A549 (cell line): ENCODE measurements at regions of chr5 and their contacts with region 1.

Region 1: DNA sequence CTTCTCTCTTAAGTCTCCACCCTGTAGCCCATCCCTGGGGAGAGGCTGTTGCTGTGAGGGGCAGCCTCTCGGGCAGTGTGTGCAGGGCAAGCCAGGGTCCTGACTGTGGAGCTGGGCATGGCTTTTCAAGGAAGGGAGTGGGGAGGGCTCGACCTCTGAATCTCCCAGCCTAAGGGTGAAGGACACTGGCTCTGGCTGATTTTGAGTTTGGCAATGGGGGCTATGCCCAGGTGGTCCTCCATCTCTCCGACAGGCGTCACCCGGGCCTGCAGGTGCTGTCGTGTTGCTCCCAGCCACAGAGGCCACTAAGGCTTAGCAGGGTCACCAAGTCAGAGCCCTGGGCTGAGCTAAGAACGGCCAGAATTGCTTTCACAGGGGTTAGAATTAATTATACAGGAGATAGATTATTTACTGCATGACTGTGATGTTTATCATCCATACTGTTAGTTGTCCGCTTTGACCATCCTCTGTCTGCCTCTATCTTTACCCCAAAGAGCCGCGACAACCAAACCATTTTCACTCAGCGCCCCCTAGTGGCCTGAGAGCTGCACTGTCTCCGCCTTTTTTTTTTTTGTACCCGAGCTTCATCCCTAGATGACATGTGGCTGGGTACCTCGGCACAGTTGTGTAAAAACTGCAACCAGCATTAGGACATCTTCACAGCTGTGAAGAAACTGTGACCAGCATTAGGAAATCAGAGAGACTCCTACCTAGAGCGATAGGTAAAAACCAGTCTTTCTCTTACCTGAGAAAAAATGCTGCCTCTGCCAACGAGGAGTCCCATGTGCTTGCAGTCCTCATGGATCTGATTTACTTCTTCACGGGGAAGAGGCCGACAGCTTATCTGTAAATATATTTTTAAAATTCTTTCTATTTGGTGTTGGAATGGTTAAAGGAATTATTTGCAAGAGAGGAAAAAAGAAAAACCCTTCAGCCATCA is 44.5 kb downstream of the AGXT2 start:
- DNase-seq: peak; percentile 54 to 66
- ATAC-seq: peak; percentile 84 to 93
- H3K4me3 ChIP-seq: no peak overlapping the region
- H3K27ac ChIP-seq: no peak overlapping the region
- H3K4me1 ChIP-seq: no peaks in the 10 kb centered on the region; the same call in 2 of the 3 replicates
- CTCF ChIP-seq: peak; percentile 84
- EP300 ChIP-seq: no peak
- POLR2A ChIP-seq: no peak
- RAD21 ChIP-seq: peak; percentile 77 to 84

Region 2: GRCh38 chr5:34474573-34475021 is 528.7 kb before region 1 on chr5:
- CTCF ChIA-PET with region 1: interaction called, 54 read pairs
- POLR2A ChIA-PET with region 1: no interaction called
- DNase-seq: peak; percentile 57 to 70
- ATAC-seq: peak; percentile 68 to 93; a peak in 5 of 6 replicates
- H3K4me3 ChIP-seq: no peak overlapping the region
- H3K27ac ChIP-seq: no peak overlapping the region
- H3K4me1 ChIP-seq: no peaks in the 10 kb centered on the region
- CTCF ChIP-seq: peak; percentile 92
- EP300 ChIP-seq: no peak
- POLR2A ChIP-seq: no peak
- RAD21 ChIP-seq: peak; percentile 90 to 94

Region 3: GRCh38 chr5:34858790-34859189 is 144.5 kb before region 1 on chr5:
- CTCF ChIA-PET with region 1: no interaction called
- POLR2A ChIA-PET with region 1: no interaction called
- DNase-seq: no peak
- ATAC-seq: no peak
- H3K4me3 ChIP-seq: no peak overlapping the region
- H3K27ac ChIP-seq: no peak overlapping the region
- H3K4me1 ChIP-seq: no peaks in the 10 kb centered on the region
- CTCF ChIP-seq: no peak
- EP300 ChIP-seq: no peak
- POLR2A ChIP-seq: no peak
- RAD21 ChIP-seq: no peak

Region 4: DNA sequence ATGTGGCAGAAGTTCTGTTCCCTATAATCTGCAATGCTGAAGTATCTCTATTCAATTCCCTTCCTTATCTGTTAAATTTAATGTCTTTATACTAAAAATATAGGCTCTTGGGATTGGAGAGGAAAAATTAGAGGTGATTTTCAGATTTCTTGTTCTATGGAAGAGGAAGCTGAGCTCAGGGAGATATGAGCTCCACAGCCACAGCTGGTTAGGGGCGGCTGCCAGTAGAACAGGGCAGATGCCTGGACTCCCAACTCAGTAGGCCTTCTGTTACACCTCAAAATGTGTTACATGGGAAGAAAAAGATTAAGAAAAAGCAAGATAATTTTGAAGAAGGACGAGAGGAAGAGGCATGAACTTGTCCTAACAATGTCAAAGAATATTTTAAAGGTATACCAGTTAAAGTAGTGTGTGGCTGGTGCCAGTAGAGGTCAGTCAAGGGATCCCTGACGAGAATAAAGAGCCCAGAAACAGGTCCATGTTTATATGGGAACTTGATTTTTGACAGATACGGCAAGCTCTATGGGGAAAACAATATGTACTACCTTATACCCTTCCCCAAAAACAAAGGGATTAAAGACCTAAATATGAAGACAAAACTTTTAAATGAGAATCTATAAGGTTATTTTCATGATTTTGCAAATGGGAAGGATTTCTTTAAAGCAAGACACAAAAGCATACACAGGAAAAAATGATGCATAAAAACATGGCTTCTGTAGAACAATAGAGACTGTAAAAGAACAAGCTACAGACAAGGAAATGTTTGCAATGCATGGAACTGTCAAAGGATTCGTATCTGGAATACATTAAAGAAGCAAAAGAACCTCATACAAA is 45.2 kb before region 1 on chr5:
- CTCF ChIA-PET with region 1: interaction called, 21 read pairs
- POLR2A ChIA-PET with region 1: no interaction called
- DNase-seq: peak; percentile 28 to 43
- ATAC-seq: peak; percentile 92 to 93
- H3K4me3 ChIP-seq: no peak overlapping the region
- H3K27ac ChIP-seq: no peak overlapping the region
- H3K4me1 ChIP-seq: no peaks in the 10 kb centered on the region
- CTCF ChIP-seq: peak; percentile 57
- EP300 ChIP-seq: no peak
- POLR2A ChIP-seq: no peak
- RAD21 ChIP-seq: peak; percentile 39 to 44; a peak in 4 of 5 replicates

Region 5: DNA sequence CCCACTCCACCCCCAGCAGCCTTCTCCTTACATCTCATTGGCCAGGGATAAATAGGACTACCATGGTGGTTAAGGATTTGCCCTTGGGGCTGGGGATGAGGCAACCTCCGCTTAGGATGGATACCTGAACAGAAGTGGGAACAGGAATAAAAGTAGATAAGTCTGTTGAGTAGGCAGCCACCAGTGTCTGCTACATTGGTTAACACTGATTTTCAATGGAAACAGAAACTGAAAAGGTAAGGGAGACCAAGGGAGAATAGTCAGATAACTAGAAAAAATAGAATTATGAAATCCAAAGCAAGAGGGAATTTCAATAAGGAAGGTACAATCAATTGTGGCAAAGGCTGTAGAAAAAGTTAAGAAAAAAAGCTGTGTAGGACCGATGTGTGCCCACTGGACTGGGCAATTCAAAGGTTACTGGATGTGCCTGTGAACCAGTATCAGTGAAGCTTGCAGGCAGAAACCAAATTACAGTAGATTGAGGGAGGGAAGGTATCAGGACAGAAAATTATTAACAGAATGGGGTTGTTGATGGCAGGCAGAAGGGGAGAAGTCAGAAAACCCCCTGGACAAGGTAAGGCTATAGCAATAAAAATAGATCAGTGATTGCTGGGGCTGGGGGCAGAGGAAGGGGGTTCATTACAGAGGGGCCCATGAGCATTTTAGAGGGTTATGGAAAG is 25.2 kb before region 1 on chr5:
- CTCF ChIA-PET with region 1: interaction called, 25 read pairs
- POLR2A ChIA-PET with region 1: no interaction called
- DNase-seq: no peak
- ATAC-seq: no peak
- H3K4me3 ChIP-seq: no peak overlapping the region
- H3K27ac ChIP-seq: no peak overlapping the region
- H3K4me1 ChIP-seq: no peaks in the 10 kb centered on the region
- CTCF ChIP-seq: no peak
- EP300 ChIP-seq: no peak
- POLR2A ChIP-seq: no peak
- RAD21 ChIP-seq: no peak

Region 6: DNA sequence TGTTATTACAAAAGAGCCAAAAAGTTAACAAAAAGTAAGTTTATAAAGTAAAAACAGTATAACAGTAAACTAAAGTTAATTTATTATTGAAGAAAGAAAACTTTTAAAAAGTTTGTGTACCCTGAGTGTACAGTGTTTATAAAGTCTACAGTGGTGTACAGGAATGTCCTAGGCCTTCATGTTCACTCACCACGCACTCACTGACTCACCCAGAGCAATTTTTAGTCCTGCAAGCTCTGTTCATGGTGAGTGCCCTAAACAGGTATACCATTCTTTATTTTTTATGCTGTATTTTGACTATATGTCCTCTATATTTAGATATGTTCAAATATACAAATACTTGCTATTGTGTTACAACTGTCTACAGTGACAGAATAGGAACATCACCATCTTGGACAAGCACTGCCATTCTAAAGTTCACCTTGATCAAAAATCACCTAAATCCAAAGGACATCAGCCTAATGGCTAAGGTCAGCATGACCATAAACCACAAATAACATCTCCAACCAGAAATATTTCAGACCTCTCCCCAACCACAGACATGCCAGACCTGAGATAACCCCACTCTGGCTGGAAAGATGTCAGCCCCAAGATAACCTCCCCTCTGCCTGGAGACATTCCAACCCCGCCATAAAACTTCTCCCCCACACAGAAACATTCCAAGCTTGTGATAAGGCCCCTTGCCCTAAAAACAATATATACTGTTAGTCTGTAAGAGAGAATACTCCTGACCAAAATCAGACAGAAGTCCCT is 11.6 kb before region 1 on chr5:
- CTCF ChIA-PET with region 1: interaction called, 34 read pairs
- POLR2A ChIA-PET with region 1: no interaction called
- DNase-seq: no peak
- ATAC-seq: no peak
- H3K4me3 ChIP-seq: no peak overlapping the region
- H3K27ac ChIP-seq: no peak overlapping the region
- H3K4me1 ChIP-seq: no peaks in the 10 kb centered on the region
- CTCF ChIP-seq: no peak
- EP300 ChIP-seq: no peak
- POLR2A ChIP-seq: no peak
- RAD21 ChIP-seq: no peak

Region 7: GRCh38 chr5:35026280-35026840 is 23.1 kb after region 1 on chr5:
- CTCF ChIA-PET with region 1: interaction called, 10 read pairs
- POLR2A ChIA-PET with region 1: no interaction called
- DNase-seq: no peak
- ATAC-seq: 0 out of 6 replicates have a peak, but pooled peaks of 1 of the 2 experiments have one; percentile 31
- H3K4me3 ChIP-seq: no peak overlapping the region
- H3K27ac ChIP-seq: no peak overlapping the region
- H3K4me1 ChIP-seq: no peaks in the 10 kb centered on the region
- CTCF ChIP-seq: no peak
- EP300 ChIP-seq: no peak
- POLR2A ChIP-seq: no peak
- RAD21 ChIP-seq: no peak